Psoas muscle (tissue), 8 donors: ENCODE measurements at regions of chr3 and their contacts with region 1.

Region 1: GRCh38 chr3:113838631-113839209 is at the start of gene GRAMD1C:
- DNase-seq: peak; percentile 86 to 91
- ATAC-seq: peak; percentile 94 to 100 (median 96)
- H3K4me3 ChIP-seq: peak within 1 kb of the TSS; percentile 67
- H3K27ac ChIP-seq: no peak within 1 kb of the TSS
- H3K4me1 ChIP-seq: no peaks in the 10 kb centered on the region
- H3K27me3 ChIP-seq: no peaks in the 10 kb centered on the region
- CTCF ChIP-seq: peak; percentile 84
- total RNA-seq, gene GRAMD1C: 0.53 to 0.81 (median 0.65) TPM

Region 2: GRCh38 chr3:112958811-112959560 is 879.7 kb before region 1 on chr3:
- intact Hi-C with region 1: no loop called
- DNase-seq: no peak
- ATAC-seq: no peak
- H3K4me3 ChIP-seq: no peak overlapping the region
- H3K27ac ChIP-seq: no peak overlapping the region
- H3K4me1 ChIP-seq: no peaks in the 10 kb centered on the region
- H3K27me3 ChIP-seq: no peaks in the 10 kb centered on the region
- CTCF ChIP-seq: no peak

Region 3: DNA sequence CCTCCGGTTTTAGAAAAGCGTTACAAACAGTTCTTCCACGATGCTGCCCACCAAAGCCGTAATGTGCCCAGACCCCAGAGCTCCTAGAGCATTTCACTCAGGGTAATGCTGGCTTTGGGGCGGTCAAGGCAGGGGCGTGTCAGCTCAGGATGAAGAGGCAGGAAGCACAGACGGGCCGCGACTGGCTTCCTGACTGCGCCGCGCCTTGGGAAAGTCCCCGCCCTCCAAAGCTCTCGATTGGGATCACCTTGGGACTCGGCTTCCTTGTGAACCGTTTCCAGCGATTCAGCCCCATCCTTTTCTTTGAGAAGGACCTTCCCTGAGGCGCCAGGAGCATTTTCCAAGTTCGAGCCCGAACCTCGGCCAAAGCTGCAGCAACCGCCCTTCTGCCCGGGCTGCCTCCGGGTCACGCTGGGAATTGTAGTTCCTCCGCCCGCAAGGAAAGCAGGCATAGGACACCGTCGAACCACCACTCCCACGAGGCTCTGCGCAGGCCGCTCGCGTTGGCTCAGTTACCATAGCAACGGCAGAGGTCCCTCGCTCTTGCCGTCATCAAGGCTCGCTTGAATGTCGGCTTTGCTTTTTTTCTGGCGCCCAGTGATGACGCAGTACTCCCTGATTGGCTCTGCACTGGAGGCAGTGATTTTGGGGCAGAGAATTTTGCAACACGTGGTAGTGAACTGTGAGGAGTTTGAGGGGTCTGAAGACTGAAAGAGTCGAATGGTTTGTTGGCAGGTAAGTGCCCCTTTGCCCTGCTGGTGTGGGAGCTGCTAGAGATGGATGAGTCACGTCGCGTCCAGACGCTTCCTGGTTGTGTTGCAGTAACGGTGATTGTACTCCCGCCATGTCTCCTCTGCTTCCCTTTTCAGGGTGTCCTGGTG is 217.7 kb after region 1 on chr3 and contains the starts of genes CCDC191 and QTRT2:
- intact Hi-C with region 1: loop called (anchors 5 to 10 kb)
- DNase-seq: peak; percentile 98 to 99
- ATAC-seq: peak; percentile 99 to 100 (median 100)
- H3K4me3 ChIP-seq: peak within 1 kb of the TSS; percentile 75
- H3K27ac ChIP-seq: peak within 1 kb of the TSS; percentile 74
- H3K4me1 ChIP-seq: peaks cover 25% of the 10 kb centered on the region
- H3K27me3 ChIP-seq: no peaks in the 10 kb centered on the region
- CTCF ChIP-seq: no peak
- total RNA-seq, gene CCDC191: 0.54 to 1.2 (median 0.78) TPM
- total RNA-seq, gene QTRT2: 7.4 to 9.6 (median 8.0) TPM

Region 4: DNA sequence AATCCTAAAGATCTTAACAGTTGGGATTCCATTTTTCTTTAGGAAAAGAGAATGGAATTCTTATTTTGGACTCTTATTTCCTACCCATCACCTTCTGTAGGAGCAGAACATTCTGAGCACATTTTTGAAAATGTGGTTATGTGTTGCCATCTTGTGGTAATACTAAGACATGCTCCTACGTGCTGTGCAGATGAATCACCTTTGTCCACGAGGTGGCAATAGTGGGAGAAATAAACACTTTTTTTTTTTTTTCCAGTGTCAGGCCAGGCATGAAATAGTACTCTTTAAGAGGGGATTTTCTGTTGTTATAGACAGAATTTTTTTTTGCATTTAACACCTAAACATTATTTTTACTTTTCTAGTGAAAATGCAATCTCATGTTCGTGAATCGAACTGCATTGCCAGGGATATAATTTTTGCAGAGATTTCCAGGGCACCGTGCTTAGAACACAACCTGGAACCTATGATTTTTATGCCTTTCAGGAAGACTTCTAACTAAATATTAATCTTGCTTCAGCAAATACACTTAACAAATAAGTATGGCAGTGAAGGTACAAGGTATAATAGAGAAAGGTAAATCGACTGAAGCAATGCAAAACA is 1981.2 kb after region 1 on chr3:
- intact Hi-C with region 1: loop called in 1 of 2 experiments (anchors 10 kb)
- DNase-seq: peak; percentile 38 to 54
- ATAC-seq: peak; percentile 73 to 92 (median 88)
- H3K4me3 ChIP-seq: no peak overlapping the region
- H3K27ac ChIP-seq: no peak overlapping the region
- H3K4me1 ChIP-seq: no peaks in the 10 kb centered on the region
- H3K27me3 ChIP-seq: no peaks in the 10 kb centered on the region
- CTCF ChIP-seq: peak; percentile 85